Activated T-helper 1 cell treated with anti-CD3 and anti-CD28 coated beads, Interleukin-12 subunit alpha, Interleukin-12 subunit beta, Interleukin-2, Interleukin-4 antibody, amounts not matched to agents 30 ng/mL and 10 ng/mL and 1 ng/mL, durations not matched to agents 14 hours and 24 hours and 36 hours (primary cell): ENCODE measurements at regions of chr22 and their contacts with region 1.

Region 1: DNA sequence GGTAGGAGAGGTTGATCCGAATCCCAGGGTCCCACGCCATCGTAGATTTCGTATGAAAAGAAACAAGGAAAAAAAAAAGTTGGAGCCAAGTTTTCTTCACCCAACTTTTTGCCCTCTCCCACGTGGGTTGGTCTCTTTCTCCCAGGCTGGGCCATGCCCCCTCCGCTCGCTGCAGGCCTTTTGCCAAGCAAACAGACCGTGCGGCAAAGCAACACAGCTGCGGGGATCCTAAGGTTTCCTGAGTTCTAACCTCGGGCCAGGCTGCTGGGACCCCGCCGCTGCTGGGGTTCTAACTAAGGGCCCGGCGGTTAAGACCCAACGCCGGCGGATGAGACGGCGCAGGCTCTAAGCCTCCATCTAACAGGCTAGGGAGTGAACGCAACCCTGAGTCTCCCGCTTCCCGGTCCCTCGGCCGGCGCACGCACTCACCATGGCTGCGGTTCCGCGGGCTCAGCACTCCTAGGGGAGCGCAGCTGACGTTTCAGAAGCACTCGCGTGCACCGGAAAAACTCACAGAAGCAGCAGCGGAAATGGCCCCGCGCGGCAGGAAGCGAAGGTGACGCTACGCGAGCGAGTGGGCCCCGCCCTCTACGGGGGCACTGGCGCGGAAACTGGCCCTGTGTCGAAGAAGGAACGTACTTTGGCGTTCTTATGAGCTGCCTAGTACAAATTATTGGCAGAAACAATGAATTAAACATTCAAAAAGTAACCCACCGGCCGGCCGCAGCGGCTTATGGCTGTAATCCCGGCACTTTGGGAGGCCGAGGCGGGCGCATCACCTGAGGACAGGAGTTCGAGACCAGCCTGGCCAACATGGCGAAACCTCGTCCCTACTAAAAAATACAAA is at the start of gene SNU13:
- DNase-seq: peak; percentile 92
- H3K4me3 Mint-ChIP-seq: peak within 1 kb of the TSS; percentile 98
- H3K27ac Mint-ChIP-seq: peak within 1 kb of the TSS; percentile 98
- H3K4me1 Mint-ChIP-seq: peaks cover 17% of the 10 kb centered on the region
- H3K27me3 Mint-ChIP-seq: no peaks in the 10 kb centered on the region
- total RNA-seq, gene SNU13: 337 and 339 TPM in 2 replicates

Region 2: GRCh38 chr22:41666661-41667258 is 21.8 kb before region 1 on chr22:
- intact Hi-C with region 1: loop called (anchors 1 kb)
- DNase-seq: peak; percentile 96
- H3K4me3 Mint-ChIP-seq: peak overlapping the region; percentile 81
- H3K27ac Mint-ChIP-seq: peak overlapping the region; percentile 95
- H3K4me1 Mint-ChIP-seq: peaks cover 17% of the 10 kb centered on the region
- H3K27me3 Mint-ChIP-seq: no peaks in the 10 kb centered on the region